A673 (cell line): ENCODE measurements at regions of chr14 and their contacts with region 1.

Region 1: GRCh38 chr14:102096214-102097114 is 9.6 kb upstream of the HSP90AA1 start:
- DNase-seq: peak; percentile 90
- H3K4me3 ChIP-seq: no peak overlapping the region
- H3K27ac ChIP-seq: no peak overlapping the region
- H3K4me1 ChIP-seq: peaks cover 10% of the 10 kb centered on the region
- H3K27me3 ChIP-seq: no peaks in the 10 kb centered on the region
- CTCF ChIP-seq: peak; percentile 93

Region 2: GRCh38 chr14:100362311-100362927 is 1734.0 kb before region 1 on chr14:
- CTCF ChIA-PET with region 1: no interaction called
- POLR2A ChIA-PET with region 1: no interaction called
- intact Hi-C with region 1: no loop called
- DNase-seq: no peak
- H3K4me3 ChIP-seq: no peak overlapping the region
- H3K27ac ChIP-seq: no peak overlapping the region
- H3K4me1 ChIP-seq: no peaks in the 10 kb centered on the region
- H3K27me3 ChIP-seq: no peaks in the 10 kb centered on the region
- CTCF ChIP-seq: no peak

Region 3: DNA sequence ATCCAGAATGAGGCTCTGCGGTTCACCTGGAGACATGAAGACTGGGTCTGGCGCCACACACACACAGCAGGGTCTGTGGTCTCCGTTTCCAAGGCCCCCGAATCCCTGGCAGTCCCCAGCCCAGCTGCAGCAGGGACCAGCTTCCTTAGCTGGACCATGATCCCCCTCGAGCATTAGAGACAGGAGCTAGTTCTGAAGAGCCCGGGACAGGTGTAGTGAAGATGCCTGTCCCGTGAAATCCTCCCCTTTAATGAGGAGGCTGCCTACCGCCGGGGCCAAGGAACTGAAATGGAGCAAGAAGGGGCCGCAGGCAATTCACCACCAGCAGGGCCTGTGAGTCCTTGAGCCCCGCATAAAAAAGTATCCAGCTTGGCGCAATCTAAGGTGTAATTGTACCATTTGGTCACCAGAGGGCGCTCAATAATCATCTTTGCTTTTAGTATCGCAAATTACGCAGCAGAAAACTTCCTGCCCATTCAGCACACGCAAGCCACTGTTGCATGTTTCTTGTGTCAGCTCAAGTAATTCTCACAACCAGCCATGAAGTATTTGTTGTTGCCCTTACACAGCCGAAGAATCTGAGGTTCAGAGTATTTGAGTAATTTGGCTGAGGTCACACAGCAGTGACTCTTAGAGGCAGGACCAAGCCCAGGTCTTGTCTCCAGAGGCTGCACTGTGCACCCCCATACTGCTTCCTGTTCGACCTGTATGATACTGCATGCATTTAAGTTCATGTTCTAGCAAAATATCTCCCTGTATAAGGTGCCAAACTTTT is 389.2 kb before region 1 on chr14:
- CTCF ChIA-PET with region 1: interaction called, 7 read pairs
- POLR2A ChIA-PET with region 1: no interaction called
- intact Hi-C with region 1: loop called (anchors 10 kb)
- DNase-seq: peak; percentile 91
- H3K4me3 ChIP-seq: no peak overlapping the region
- H3K27ac ChIP-seq: no peak overlapping the region
- H3K4me1 ChIP-seq: peaks cover 6% of the 10 kb centered on the region
- H3K27me3 ChIP-seq: no peaks in the 10 kb centered on the region
- CTCF ChIP-seq: peak; percentile 81

Region 4: DNA sequence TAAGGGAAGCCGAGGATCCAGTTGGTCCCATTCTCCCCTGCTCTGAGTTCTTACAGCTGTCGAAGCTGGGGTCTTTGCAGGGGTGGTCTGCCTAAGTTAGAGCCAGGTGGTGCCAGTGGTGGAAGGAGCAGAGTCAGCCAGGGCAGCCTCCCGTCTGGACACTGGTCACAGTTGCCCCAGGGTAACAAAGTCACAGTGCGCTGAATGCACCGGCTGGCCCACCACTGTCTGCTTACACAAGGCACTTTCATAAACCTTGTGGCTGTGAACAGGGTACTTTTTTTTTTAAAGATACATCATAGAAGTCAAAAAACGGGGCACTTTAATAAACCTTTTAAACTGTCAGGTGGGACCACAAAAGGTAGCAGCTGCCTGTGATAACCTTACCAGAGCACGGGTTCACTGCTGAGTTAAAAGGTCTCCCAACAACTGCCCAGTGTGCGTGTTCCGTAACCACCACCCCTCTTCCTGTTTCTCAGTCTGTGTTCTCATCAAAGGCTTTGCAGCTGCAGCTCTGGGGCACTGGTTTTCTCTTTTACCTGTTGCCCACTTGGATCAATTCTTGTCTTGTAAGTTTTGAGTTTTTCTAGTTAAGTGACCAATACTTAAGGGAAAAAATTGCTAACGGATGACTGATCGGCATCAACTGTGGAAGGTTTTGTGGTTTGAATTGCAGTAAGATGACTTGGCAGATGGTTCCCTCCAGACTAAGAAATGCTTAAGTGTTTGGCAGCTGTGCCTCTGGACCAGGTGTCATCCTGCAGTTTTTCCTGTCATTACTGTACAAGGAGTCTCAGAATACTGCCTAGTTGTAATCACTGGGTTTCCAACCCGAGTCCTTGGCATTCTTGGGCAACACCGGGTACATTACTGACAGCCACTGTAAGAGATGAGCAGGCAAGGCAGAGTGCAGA is 76.1 kb before region 1 on chr14:
- CTCF ChIA-PET with region 1: interaction called, 13 read pairs
- POLR2A ChIA-PET with region 1: no interaction called
- intact Hi-C with region 1: no loop called
- DNase-seq: no peak
- H3K4me3 ChIP-seq: no peak overlapping the region
- H3K27ac ChIP-seq: no peak overlapping the region
- H3K4me1 ChIP-seq: no peaks in the 10 kb centered on the region
- H3K27me3 ChIP-seq: no peaks in the 10 kb centered on the region
- CTCF ChIP-seq: no peak

Region 5: GRCh38 chr14:102063091-102063802 is 33.2 kb before region 1 on chr14:
- CTCF ChIA-PET with region 1: interaction called, 11 read pairs
- POLR2A ChIA-PET with region 1: interaction called, 14 read pairs
- intact Hi-C with region 1: loop called (anchors 1 kb)
- DNase-seq: peak; percentile 95
- H3K4me3 ChIP-seq: no peak overlapping the region
- H3K27ac ChIP-seq: no peak overlapping the region
- H3K4me1 ChIP-seq: peaks cover 4% of the 10 kb centered on the region
- H3K27me3 ChIP-seq: no peaks in the 10 kb centered on the region
- CTCF ChIP-seq: peak; percentile 72